Right cardiac atrium (tissue), 5 donors: ENCODE measurements at regions of chr17 and their contacts with region 1.

Region 1: DNA sequence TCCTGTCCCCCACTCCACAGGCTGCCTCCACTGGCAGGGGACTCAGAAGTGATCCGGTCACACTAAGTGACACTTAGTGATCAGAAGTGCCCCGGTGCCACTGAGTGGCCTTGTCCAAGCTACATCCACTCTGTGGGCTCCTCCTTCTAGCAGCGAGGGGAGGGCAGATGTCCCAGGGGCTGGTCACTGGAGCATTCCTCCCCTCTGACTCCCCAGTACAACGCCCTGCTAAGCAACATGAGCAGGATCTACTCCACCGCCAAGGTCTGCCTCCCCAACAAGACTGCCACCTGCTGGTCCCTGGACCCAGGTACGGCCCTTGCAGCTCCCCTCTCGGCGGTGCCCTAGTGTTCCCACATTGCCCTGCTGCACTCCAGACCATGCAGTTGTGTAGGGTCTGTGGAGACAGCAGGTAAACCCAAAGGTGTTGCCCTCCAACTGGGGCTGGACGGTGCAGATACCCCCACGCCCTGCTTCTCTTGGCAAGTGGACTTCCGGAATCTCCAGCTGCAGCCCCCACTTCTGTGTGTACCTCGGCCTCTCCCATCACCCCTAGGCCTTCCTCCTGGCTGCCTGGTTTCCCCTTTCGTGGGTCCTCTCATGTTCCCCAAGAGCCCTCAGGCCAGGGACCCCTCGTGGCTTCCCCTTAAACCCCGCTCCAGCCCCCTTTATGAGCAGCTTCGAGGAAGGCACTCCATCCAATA is 2.1 kb downstream of the ACE start:
- DNase-seq: peak; percentile 85 to 92 (median 90)
- ATAC-seq: peak; percentile 82 to 85
- H3K4me3 ChIP-seq: no peak overlapping the region
- H3K27ac ChIP-seq: no peak overlapping the region
- H3K4me1 ChIP-seq: peaks cover 13% of the 10 kb centered on the region
- H3K27me3 ChIP-seq: no peaks in the 10 kb centered on the region

Region 2: GRCh38 chr17:63399316-63399715 is 79.6 kb before region 1 on chr17:
- intact Hi-C with region 1: no loop called
- DNase-seq: no peak
- ATAC-seq: peak in 1 of 2 donors; percentile 4
- H3K4me3 ChIP-seq: no peak overlapping the region
- H3K27ac ChIP-seq: peak overlapping the region; percentile 58
- H3K4me1 ChIP-seq: peaks cover 2% of the 10 kb centered on the region
- H3K27me3 ChIP-seq: no peaks in the 10 kb centered on the region

Region 3: GRCh38 chr17:63425482-63425881 is 53.5 kb before region 1 on chr17:
- intact Hi-C with region 1: loop called (anchors 2 to 10 kb)
- DNase-seq: peak; percentile 74 to 89 (median 84)
- ATAC-seq: peak; percentile 73 to 82
- H3K4me3 ChIP-seq: no peak overlapping the region
- H3K27ac ChIP-seq: no peak overlapping the region
- H3K4me1 ChIP-seq: peaks cover 2% of the 10 kb centered on the region
- H3K27me3 ChIP-seq: no peaks in the 10 kb centered on the region

Region 4: GRCh38 chr17:63442511-63443035 is 36.4 kb before region 1 on chr17:
- intact Hi-C with region 1: loop called in 1 of 4 experiments (anchors 5 kb)
- DNase-seq: peak in 1 of 3 donors; percentile 59
- ATAC-seq: peak in 1 of 2 donors; percentile 9
- H3K4me3 ChIP-seq: no peak overlapping the region
- H3K27ac ChIP-seq: no peak overlapping the region
- H3K4me1 ChIP-seq: peaks cover 9% of the 10 kb centered on the region
- H3K27me3 ChIP-seq: no peaks in the 10 kb centered on the region

Region 5: DNA sequence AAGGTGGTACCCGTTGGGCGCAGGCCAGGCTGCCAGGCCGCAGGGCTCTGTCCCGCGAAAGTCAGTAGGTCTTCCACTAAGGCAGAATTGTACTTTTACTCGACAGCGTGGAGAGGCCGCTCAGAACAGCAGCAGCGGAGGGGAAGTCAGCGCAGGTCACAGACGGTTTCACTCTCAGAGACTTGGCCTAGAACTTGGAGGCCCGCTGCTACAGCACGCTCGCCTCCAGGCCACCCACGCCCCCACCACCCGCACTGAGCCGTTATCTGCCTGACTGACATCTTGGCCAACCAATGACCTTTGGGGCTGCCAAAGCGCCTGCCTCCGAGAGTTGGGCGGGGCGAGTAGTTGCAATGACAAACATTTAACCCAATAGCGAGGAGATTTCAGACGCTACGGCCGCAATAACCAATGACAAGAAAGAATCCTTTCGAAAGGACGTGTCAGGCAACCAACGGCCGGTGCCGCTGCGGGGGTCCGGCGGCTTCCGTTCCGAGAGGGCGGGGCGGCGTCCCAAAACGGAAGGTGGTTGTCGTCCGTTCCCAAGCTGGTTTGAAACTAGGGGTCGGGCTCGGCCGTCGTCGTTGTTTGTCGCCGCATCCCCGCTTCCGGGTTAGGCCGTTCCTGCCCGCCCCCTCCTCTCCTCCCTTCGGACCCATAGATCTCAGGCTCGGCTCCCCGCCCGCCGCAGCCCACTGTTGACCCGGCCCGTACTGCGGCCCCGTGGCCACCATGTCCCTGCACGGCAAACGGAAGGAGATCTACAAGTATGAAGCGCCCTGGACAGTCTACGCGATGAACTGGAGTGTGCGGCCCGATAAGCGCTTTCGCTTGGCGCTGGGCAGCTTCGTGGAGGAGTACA is 71.2 kb after region 1 on chr17 and contains the start of gene DCAF7:
- intact Hi-C with region 1: no loop called
- DNase-seq: peak; percentile 99
- ATAC-seq: peak; percentile 99
- H3K4me3 ChIP-seq: peak within 1 kb of the TSS; percentile 86
- H3K27ac ChIP-seq: peak within 1 kb of the TSS; percentile 83
- H3K4me1 ChIP-seq: peaks cover 3% of the 10 kb centered on the region
- H3K27me3 ChIP-seq: no peaks in the 10 kb centered on the region
- total RNA-seq, gene DCAF7: 45.0 to 57.3 (median 50.4) TPM

Region 6: DNA sequence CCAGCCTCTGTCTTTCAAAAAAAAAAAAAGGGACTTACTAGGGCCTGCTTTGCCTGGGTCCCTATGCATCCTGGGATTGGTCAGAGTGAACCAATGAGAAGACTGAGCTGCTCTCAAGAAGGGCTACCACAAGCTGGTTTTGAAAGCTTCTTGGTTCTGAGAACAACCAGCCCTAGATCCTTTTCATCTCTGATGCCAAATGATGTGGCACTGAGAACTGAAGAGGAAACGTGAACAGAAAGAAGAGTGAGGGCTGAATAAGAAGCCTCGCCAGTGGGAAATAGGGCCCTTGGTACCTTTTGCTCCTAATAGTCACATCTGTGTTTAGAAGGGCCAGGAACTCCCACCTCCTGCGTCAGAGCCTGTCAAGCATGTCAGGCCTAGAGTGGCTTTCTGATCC is 132.4 kb after region 1 on chr17:
- intact Hi-C with region 1: no loop called
- DNase-seq: no peak
- ATAC-seq: no peak
- H3K4me3 ChIP-seq: no peak overlapping the region
- H3K27ac ChIP-seq: no peak overlapping the region
- H3K4me1 ChIP-seq: no peaks in the 10 kb centered on the region
- H3K27me3 ChIP-seq: no peaks in the 10 kb centered on the region

Region 7: GRCh38 chr17:63646488-63646806 is 167.5 kb after region 1 on chr17:
- intact Hi-C with region 1: no loop called
- DNase-seq: no peak
- ATAC-seq: no peak
- H3K4me3 ChIP-seq: no peak overlapping the region
- H3K27ac ChIP-seq: no peak overlapping the region
- H3K4me1 ChIP-seq: peaks cover 8% of the 10 kb centered on the region
- H3K27me3 ChIP-seq: no peaks in the 10 kb centered on the region